GM12878 (cell line): ENCODE measurements at regions of chr14 and their contacts with region 1.

Region 1: DNA sequence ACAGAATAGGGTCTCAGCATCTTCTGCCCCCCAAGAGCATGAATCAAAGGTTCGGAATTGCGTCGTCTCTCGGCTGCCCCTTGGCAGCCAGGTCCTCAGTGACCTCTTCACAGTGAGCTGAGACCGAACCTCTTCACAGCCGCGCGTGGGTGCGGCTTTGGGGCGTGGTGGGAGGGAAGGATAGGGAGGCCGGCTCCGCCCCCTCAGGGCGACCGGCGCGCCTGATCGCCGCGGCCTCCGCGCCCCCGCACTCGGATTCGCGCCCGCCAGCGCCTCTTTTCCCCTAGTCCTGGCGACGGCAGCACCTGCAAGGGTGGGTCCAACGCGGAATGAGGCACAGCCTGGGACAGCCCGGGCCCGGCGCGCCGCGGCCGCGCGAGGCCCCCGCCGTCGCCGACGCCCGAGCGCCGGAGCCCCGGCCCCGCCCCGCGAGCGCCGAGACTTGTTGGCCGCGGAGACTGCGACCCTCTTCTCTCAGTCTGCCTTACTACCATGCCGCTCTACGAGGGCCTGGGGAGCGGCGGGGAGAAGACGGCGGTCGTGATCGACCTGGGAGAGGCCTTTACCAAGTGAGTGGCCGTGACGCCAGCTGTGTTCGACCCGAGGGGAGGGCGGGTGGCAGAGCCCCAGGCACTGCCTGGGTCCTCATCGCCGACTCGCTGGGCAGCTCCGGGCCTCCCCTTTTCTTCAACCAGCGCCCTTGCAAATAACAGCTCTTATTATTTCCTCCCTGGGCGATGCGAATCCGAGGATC is at the start of gene ACTR10:
- DNase-seq: peak; percentile 55
- ATAC-seq: peak; percentile 93
- H3K4me3 ChIP-seq: peak within 1 kb of the TSS; percentile 96
- H3K27ac ChIP-seq: peak within 1 kb of the TSS; percentile 70
- H3K4me1 ChIP-seq: no peaks in the 10 kb centered on the region; the same call in 1 of the 2 replicates
- H3K27me3 ChIP-seq: no peaks in the 10 kb centered on the region
- CTCF ChIP-seq: no peak
- EP300 ChIP-seq: no peak
- POLR2A ChIP-seq: peak; percentile 86
- RAD21 ChIP-seq: no peak
- polyA plus RNA-seq, gene ACTR10: 34.0 to 50.5 TPM

Region 2: DNA sequence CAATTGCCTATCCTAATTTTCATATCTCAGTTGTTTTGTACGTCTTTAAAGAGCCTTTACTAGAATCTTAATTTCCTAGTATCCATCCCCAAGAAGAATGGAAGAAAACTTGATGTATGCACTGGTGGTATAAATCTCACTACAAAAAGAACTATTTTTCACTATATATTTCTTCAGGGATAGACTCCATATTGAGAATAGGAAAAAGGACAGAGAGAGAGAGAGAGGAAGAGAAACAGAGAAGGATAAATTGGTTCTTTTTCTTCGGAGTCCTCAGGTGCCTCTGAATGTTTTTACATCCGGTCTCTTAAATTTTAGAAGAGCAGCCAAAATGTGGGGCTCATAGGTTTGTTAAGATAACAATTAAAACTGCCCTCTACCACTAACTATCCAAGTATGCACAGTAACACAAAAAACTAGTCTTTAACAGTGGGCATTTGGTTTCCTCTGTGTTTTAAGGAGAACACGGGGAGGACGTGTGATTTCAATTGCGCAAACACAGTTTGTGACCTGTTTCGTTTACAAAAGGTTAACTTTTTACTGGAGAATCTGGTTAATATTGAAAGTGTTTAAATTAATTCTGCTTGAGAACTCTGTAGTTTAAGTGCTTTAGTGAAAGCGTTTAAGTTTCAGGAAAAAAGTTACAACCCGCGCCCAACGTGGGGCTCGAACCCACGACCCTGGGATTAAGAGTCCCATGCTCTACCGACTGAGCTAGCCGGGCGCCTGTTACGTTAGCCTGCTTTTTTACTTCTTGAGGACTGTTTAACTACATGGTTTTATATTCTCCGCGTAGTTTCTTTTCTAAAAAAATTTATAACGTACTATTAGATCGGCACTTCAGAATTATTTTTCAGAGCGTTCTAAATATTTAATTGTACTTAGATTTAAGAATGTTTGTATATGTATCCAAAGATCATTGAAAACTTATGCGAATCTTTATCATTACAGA is 39.6 kb after region 1 on chr14:
- CTCF ChIA-PET with region 1: no interaction called
- POLR2A ChIA-PET with region 1: interaction called, 4 read pairs
- RAD21 ChIA-PET with region 1: no interaction called
- SMC1A ChIA-PET with region 1: interaction called, 3 read pairs
- in situ Hi-C with region 1: no loop called
- intact Hi-C with region 1: loop called (anchors 5 kb)
- DNase-seq: peak; percentile 64
- ATAC-seq: peak; percentile 54
- H3K4me3 ChIP-seq: peak overlapping the region; percentile 78
- H3K27ac ChIP-seq: peak overlapping the region; percentile 70
- H3K4me1 ChIP-seq: peaks cover 2% of the 10 kb centered on the region; the same call in 1 of the 2 replicates
- H3K27me3 ChIP-seq: no peaks in the 10 kb centered on the region
- CTCF ChIP-seq: no peak
- EP300 ChIP-seq: peak in 1 of 2 experiments; percentile 74; a peak in 1 of 4 replicates
- POLR2A ChIP-seq: no peak
- RAD21 ChIP-seq: no peak

Region 3: DNA sequence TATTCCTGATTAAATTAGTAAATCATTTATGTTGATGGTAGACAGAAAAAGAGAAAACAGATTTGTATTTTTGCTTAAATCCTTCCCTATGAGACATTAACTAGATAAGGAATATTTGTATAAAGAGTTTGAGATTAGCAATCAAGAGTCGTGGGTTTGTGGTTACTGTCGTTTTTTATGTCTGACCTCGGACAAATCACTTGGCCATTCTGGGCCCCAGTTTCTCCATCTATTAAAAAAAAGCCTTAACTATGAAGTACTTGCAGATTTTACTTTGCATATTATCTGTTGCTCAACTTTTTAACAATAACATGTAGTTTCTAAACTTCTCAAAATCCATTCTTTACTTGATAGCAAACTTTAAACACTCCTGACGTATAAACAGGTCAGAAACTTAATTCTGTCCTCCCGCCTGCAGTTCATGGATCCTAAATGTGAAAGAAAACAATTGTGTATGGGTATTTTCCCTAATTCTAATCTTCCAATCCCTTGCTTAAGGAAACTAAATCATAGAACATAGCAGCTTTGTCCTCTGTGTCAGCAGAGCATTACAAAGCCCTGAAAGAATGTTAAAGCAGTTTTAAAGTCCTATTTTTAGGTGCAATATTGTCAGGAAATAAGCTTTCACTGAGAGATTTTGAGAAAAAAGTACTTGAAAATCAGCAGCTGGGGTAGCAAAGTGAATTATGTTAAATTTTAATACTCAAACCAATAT is 1147.0 kb after region 1 on chr14:
- CTCF ChIA-PET with region 1: no interaction called
- POLR2A ChIA-PET with region 1: no interaction called
- RAD21 ChIA-PET with region 1: no interaction called
- SMC1A ChIA-PET with region 1: no interaction called
- in situ Hi-C with region 1: no loop called
- intact Hi-C with region 1: loop called (anchors 5 kb)
- DNase-seq: no peak
- ATAC-seq: no peak
- H3K4me3 ChIP-seq: no peak overlapping the region
- H3K27ac ChIP-seq: no peak overlapping the region
- H3K4me1 ChIP-seq: no peaks in the 10 kb centered on the region
- H3K27me3 ChIP-seq: no peaks in the 10 kb centered on the region
- CTCF ChIP-seq: no peak
- EP300 ChIP-seq: no peak
- POLR2A ChIP-seq: no peak
- RAD21 ChIP-seq: no peak